ENCODE measurements at regions of chr5 and their contacts with region 1.

Region 1: DNA sequence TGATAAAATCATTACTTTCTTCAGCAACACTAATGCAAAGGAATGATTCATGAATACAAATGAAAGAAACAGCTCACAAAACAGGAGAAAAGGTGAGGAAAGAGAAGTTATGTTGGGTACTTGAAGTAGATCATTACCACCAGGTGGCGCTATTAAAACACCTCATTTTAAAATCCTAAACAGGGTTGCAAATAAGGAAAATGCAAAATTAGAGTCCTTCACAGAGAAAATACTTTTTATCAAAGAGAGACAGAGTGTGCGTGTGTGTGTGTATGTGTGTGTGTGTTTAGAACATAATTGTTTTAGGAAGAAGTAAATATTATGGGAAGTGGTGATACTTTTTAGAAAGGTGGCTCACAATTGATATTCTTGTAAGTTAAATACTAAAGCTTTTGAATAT is 49.5 kb upstream of the CD180 start:
- DNase-seq: peak in 1 of 5 donors; percentile 31
- ATAC-seq: peak in 3 of 4 donors; percentile 28 to 55 (median 42)
- H3K4me3 ChIP-seq: no peak overlapping the region
- H3K27ac ChIP-seq: peak overlapping the region in 4 of 12 donors; percentile 32 to 65 (median 32)
- H3K4me1 ChIP-seq: peaks cover 0 to 35% (median 18%) of the 10 kb centered on the region in 12 donors
- H3K27me3 ChIP-seq: no peaks in the 10 kb centered on the region
- CTCF ChIP-seq: peak; percentile 66 to 86 (median 80)
- POLR2A ChIP-seq: no peak

Region 2: GRCh38 chr5:66840511-66841013 is 405.5 kb before region 1 on chr5:
- intact Hi-C with region 1: no loop called
- DNase-seq: no peak
- ATAC-seq: peak in 1 of 4 donors; percentile 21
- H3K4me3 ChIP-seq: no peak overlapping the region
- H3K27ac ChIP-seq: no peak overlapping the region
- H3K4me1 ChIP-seq: peaks cover 0 to 52% (median 16%) of the 10 kb centered on the region in 12 donors
- H3K27me3 ChIP-seq: no peaks in the 10 kb centered on the region
- CTCF ChIP-seq: no peak
- POLR2A ChIP-seq: no peak

Region 3: DNA sequence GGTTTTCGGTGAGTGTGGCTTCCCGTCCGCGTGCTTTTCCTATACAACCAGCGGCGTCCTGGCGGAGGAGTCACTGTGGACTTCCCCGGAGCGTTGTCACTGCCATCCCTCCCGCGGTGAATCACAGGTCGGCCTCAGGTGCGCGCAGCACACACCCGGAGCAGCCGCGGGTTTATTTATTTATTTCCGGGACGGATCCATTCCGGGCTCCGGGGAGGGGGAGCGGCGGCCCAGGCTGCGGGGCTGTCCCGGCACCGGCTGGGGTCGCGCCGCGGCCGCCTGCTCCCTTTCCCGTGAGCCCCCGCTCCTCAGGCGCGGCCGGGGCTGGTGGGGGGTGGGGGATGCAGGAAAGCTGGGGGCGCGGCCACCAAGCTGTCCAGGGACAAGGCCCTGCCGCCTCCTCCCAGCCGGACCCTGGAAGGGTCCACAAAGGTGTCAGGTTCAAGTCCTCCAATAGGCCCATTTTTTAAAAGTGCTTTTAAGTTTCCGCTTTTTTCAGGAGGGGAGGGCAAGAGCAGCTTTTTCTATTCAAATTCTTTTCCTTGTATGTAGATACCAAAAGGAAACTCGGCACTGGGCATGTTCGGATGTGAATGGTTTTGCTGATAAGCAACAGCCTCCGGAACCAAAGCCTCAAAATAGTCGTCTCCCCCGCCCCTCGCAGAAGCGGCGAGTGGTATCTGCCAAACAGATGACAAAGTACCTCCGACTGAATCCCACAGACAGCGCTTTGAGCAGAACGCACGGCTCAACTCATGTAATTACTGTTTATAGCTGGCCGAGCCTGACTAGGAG is 242.0 kb before region 1 on chr5:
- intact Hi-C with region 1: no loop called
- DNase-seq: peak; percentile 86 to 94 (median 91)
- ATAC-seq: peak; percentile 85 to 93 (median 92)
- H3K4me3 ChIP-seq: peak overlapping the region; percentile 30 to 69 (median 62)
- H3K27ac ChIP-seq: peak overlapping the region; percentile 83 to 95 (median 90)
- H3K4me1 ChIP-seq: peaks cover 0 to 56% (median 39%) of the 10 kb centered on the region in 12 donors
- H3K27me3 ChIP-seq: no peaks in the 10 kb centered on the region
- CTCF ChIP-seq: peak in 1 of 12 donors; percentile 10
- POLR2A ChIP-seq: peak in 1 of 2 donors; percentile 78

Region 4: DNA sequence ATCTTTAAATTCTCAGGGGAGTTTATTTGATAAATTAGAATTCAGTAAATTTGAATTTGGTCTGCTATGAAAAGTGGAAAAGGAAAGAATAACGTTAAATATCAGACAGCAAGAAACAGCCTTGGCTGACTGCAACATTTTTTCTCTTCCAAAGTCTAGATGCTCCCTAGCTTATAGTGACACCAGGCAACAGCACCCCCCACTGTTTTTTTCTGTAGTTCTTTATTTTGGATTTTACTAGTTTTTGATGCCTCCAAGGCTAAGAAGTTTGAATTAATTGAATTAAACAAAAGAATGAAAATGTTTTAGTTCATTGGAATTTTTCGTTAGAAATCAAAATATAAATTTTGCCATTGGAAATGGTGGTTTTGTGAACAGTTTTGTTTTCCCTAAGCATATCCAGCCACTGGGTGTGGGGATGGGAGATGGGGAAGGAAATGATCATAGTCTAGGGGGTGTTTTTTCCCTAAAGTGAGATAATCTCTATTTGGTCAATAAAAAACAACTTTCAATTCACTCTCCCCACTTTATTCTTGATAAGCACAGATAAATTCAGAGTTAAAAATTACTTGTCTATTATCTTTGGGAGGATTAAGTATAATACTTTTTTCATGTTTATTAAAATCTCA is 149.8 kb after region 1 on chr5:
- intact Hi-C with region 1: loop called in 1 of 10 experiments (anchors 5 kb)
- DNase-seq: no peak
- ATAC-seq: no peak
- H3K4me3 ChIP-seq: no peak overlapping the region
- H3K27ac ChIP-seq: no peak overlapping the region
- H3K4me1 ChIP-seq: peaks cover 0 to 3% (median 0%) of the 10 kb centered on the region in 12 donors
- H3K27me3 ChIP-seq: no peaks in the 10 kb centered on the region
- CTCF ChIP-seq: peak in 4 of 12 donors; percentile 6 to 36 (median 21)
- POLR2A ChIP-seq: no peak

Region 5: DNA sequence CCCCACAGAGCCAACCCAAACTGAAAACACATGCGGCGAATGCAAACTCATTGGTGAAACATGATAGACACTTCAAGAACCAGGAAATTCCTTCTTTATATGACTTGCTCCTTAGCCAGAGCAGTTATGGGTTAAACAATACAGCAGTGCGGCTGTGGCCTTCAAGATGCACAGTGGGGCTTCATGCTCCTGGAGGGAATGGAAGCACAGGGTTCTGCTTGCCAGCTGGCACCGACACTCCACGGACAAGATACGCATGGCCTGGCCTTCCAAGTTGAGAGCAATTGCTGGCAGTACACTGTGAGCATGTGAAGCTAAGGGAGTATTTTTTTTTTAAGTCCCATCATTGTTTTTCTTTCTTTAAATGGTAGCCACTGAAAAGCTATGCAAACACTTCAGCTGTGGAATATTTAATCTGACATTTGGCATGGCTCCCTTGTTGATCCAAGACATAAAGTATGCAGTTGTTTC is 402.1 kb after region 1 on chr5:
- intact Hi-C with region 1: loop called in 1 of 10 experiments (anchors 5 kb)
- DNase-seq: peak; percentile 75 to 90 (median 85)
- ATAC-seq: peak; percentile 97 to 98 (median 98)
- H3K4me3 ChIP-seq: no peak overlapping the region
- H3K27ac ChIP-seq: peak overlapping the region in 9 of 12 donors; percentile 44 to 87 (median 68)
- H3K4me1 ChIP-seq: peaks cover 0 to 38% (median 12%) of the 10 kb centered on the region in 12 donors
- H3K27me3 ChIP-seq: no peaks in the 10 kb centered on the region
- CTCF ChIP-seq: no peak
- POLR2A ChIP-seq: no peak

Region 6: DNA sequence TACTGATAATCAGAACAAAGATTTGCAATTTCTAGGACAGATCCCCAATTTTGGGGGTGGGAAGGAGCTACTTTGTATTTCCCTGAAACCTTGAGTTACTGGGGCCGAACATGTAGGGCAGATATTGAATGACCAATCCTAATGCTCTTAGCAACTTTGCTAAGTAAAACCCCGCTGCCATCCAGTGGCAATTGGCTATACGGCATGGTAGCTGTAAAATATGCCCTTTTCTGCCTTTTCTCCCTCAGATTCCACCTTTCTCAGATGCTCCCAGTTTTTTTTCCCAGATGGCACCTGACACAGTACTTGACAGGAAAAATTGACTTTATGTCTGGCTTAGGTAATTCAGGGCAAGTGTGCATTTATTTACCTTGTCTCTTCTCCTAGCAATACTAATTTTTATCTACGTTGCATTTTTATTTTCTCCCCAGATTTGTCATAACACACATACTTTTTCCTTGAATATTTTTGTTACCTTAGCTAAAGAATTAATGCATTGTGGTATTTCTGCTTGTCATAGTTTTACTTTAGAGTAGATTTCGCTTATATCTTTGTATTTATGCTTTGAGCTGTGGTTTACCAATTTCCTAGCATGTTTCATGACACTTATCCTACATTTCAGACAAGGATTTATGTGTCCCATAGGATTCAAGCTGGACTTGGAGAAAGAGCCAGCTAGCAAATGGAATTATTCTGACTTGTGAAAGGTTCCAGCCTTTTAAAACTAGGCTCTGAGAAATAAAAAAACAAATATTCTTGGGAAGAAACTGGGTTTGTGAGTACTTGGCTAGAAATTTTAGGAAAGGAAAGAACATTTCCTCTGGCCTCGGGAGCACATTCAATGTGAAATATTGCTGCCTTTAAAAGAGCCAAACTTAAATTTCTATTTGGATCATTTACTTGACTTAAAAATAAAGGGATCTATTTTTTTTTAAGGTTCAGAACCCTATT is 1006.8 kb after region 1 on chr5:
- intact Hi-C with region 1: loop called (anchors 2 to 10 kb)
- DNase-seq: peak in 4 of 5 donors; percentile 50 to 61 (median 60)
- ATAC-seq: peak; percentile 37 to 79 (median 74)
- H3K4me3 ChIP-seq: peak overlapping the region in 6 of 12 donors; percentile 1 to 24 (median 8)
- H3K27ac ChIP-seq: peak overlapping the region; percentile 21 to 85 (median 77)
- H3K4me1 ChIP-seq: peaks cover 9 to 100% (median 98%) of the 10 kb centered on the region in 12 donors
- H3K27me3 ChIP-seq: no peaks in the 10 kb centered on the region
- CTCF ChIP-seq: peak; percentile 53 to 83 (median 76)
- POLR2A ChIP-seq: no peak

Region 7: DNA sequence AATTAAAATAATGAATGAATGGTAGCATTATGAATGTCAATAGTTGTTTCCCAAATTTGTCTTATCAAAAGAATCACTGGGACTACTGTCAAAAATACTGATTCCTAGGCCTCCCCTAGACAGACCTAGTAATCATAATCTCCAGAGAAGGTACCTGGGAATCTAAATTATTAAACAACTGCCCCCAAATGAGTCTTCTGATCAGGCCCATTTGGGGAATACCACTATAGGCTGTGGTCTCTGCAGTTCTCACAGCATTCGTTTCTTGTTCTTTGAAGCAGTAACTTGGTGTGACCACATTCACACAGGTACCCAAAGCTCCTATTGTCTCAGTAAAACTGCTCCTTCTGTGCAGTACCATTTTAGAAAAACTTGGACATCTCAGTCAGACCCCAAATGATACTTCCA is 1200.4 kb after region 1 on chr5:
- intact Hi-C with region 1: loop called in 2 of 10 experiments (anchors 10 kb)
- DNase-seq: no peak
- ATAC-seq: no peak
- H3K4me3 ChIP-seq: no peak overlapping the region
- H3K27ac ChIP-seq: no peak overlapping the region
- H3K4me1 ChIP-seq: peaks cover 0 to 24% (median 11%) of the 10 kb centered on the region in 12 donors
- H3K27me3 ChIP-seq: no peaks in the 10 kb centered on the region
- CTCF ChIP-seq: no peak
- POLR2A ChIP-seq: no peak

Region 8: GRCh38 chr5:68962757-68963484 is 1716.8 kb after region 1 on chr5:
- intact Hi-C with region 1: loop called in 2 of 10 experiments (anchors 10 kb)
- DNase-seq: peak in 4 of 5 donors; percentile 60 to 71 (median 63)
- ATAC-seq: peak; percentile 83 to 92 (median 88)
- H3K4me3 ChIP-seq: peak overlapping the region in 1 of 12 donors; percentile 10
- H3K27ac ChIP-seq: peak overlapping the region in 5 of 12 donors; percentile 0 to 38 (median 15)
- H3K4me1 ChIP-seq: peaks cover 0 to 9% (median 0%) of the 10 kb centered on the region in 12 donors
- H3K27me3 ChIP-seq: no peaks in the 10 kb centered on the region
- CTCF ChIP-seq: peak; percentile 71 to 92 (median 82)
- POLR2A ChIP-seq: no peak

Measured in heart left ventricle (tissue), 16 donors.